ENCODE measurements at regions of chr4 and their contacts with region 1.

Region 1: GRCh38 chr4:87006676-87007527 is 72.1 kb downstream of the AFF1 start:
- DNase-seq: peak; percentile 93
- ATAC-seq: peak; percentile 83
- H3K4me3 Mint-ChIP-seq: peak overlapping the region; percentile 97
- H3K27ac Mint-ChIP-seq: peak overlapping the region; percentile 98
- H3K4me1 Mint-ChIP-seq: peaks cover 56% of the 10 kb centered on the region
- H3K27me3 Mint-ChIP-seq: no peaks in the 10 kb centered on the region
- CTCF ChIP-seq: no peak

Region 2: GRCh38 chr4:85701861-85702321 is 1305.0 kb before region 1 on chr4:
- CTCF ChIA-PET with region 1: no interaction called
- POLR2A ChIA-PET with region 1: no interaction called
- intact Hi-C with region 1: loop called (anchors 10 kb)
- DNase-seq: no peak
- ATAC-seq: peak; percentile 80
- H3K4me3 Mint-ChIP-seq: peak overlapping the region; percentile 70
- H3K27ac Mint-ChIP-seq: peak overlapping the region; percentile 93
- H3K4me1 Mint-ChIP-seq: peaks cover 73% of the 10 kb centered on the region
- H3K27me3 Mint-ChIP-seq: no peaks in the 10 kb centered on the region
- CTCF ChIP-seq: no peak

Region 3: DNA sequence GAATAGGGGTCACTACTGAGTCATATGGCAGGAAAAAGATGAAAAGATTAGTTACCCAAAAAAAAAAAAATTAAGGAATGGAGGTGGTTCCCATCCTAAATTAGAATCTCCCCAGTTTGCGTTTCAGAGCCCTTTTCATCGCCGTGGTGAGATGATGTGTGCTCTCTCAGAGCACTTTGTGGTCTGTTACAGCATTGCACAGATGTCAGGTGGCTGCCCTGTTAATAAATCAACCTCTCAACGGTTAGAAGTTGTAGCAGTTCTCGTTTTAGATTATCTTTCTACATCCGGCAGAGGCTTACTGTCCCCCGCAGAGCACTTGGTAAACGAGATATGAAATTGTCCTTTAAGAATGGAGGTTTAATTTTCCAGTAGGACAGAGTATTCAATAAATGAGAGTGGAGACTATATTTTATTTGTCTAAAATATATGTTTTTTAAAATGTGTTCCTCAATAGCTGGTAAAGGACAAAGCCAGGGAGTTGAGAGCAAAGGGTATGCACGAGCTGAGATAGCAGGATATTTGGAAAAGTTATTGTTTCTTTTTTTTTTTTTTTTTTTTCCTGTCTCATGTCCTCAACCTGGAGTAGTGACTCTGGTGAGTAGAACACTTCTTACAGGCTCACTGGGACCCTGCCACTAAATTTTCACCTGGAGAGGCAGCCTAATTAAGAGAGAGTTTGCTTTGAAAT is 45.2 kb before region 1 on chr4:
- CTCF ChIA-PET with region 1: no interaction called
- POLR2A ChIA-PET with region 1: interaction called, 4 read pairs
- intact Hi-C with region 1: loop called (anchors 1 kb)
- DNase-seq: no peak
- ATAC-seq: peak; percentile 89
- H3K4me3 Mint-ChIP-seq: peak overlapping the region; percentile 33
- H3K27ac Mint-ChIP-seq: peak overlapping the region; percentile 82
- H3K4me1 Mint-ChIP-seq: peaks cover 50% of the 10 kb centered on the region
- H3K27me3 Mint-ChIP-seq: no peaks in the 10 kb centered on the region
- CTCF ChIP-seq: no peak

Region 4: GRCh38 chr4:87026800-87027495 is 20.0 kb after region 1 on chr4:
- CTCF ChIA-PET with region 1: interaction called, 3 read pairs
- POLR2A ChIA-PET with region 1: interaction called, 21 read pairs
- intact Hi-C with region 1: loop called (anchors 1 kb)
- DNase-seq: no peak
- ATAC-seq: peak; percentile 94
- H3K4me3 Mint-ChIP-seq: peak overlapping the region; percentile 56
- H3K27ac Mint-ChIP-seq: peak overlapping the region; percentile 89
- H3K4me1 Mint-ChIP-seq: peaks cover 65% of the 10 kb centered on the region
- H3K27me3 Mint-ChIP-seq: no peaks in the 10 kb centered on the region
- CTCF ChIP-seq: no peak

Region 5: DNA sequence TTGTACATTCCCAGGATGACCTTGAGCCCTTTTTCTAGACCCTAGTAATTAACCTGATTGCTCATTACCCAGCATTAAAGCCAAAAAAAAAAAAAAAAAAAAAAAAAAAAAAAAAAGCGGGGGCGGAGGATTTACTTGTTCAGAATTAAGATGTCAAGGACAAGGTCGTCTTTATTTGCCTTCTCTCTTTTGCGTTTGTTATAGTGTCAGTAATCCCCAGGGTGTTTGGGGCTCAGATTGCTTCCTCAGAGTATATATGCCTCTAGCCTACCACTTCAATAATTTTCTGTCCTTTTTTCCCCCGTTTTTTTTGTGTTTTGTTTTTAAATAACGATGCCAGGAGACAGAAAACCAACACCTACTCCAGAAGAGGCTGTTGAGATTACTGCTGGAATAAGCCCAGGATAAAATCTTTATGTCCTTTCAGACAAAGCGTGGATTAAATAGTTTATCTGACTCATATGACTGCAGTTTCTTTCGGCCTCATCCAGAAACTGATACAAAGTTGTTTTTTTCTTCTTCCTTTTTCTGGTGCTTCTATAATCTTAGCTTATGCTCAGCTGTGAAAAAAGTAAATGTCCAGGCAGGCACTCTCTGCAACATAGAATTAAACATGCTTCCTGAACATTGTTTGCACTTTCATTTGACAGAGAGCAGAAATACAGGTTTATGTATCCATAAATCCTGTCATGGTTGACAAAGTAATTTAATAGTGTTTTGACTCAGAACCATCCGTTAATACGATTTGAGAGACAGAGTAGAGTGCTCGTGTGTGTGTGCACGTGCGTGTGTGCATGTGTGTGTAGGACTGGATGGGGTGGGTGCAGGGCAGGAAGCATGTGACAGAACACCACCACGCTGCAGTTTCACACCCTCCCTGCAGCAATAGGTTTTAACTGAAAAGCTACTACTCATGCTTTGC is 66.6 kb after region 1 on chr4:
- CTCF ChIA-PET with region 1: no interaction called
- POLR2A ChIA-PET with region 1: interaction called, 28 read pairs
- intact Hi-C with region 1: loop called (anchors 1 kb)
- DNase-seq: peak; percentile 35
- ATAC-seq: peak; percentile 84
- H3K4me3 Mint-ChIP-seq: peak overlapping the region; percentile 82
- H3K27ac Mint-ChIP-seq: peak overlapping the region; percentile 93
- H3K4me1 Mint-ChIP-seq: peaks cover 40% of the 10 kb centered on the region
- H3K27me3 Mint-ChIP-seq: no peaks in the 10 kb centered on the region
- CTCF ChIP-seq: no peak

Region 6: GRCh38 chr4:87093443-87094123 is 86.7 kb after region 1 on chr4:
- CTCF ChIA-PET with region 1: interaction called, 10 read pairs
- POLR2A ChIA-PET with region 1: interaction called, 25 read pairs
- intact Hi-C with region 1: loop called (anchors 1 kb)
- DNase-seq: no peak
- ATAC-seq: peak; percentile 89
- H3K4me3 Mint-ChIP-seq: no peak overlapping the region
- H3K27ac Mint-ChIP-seq: peak overlapping the region; percentile 62
- H3K4me1 Mint-ChIP-seq: peaks cover 20% of the 10 kb centered on the region
- H3K27me3 Mint-ChIP-seq: no peaks in the 10 kb centered on the region
- CTCF ChIP-seq: peak; percentile 15

Region 7: DNA sequence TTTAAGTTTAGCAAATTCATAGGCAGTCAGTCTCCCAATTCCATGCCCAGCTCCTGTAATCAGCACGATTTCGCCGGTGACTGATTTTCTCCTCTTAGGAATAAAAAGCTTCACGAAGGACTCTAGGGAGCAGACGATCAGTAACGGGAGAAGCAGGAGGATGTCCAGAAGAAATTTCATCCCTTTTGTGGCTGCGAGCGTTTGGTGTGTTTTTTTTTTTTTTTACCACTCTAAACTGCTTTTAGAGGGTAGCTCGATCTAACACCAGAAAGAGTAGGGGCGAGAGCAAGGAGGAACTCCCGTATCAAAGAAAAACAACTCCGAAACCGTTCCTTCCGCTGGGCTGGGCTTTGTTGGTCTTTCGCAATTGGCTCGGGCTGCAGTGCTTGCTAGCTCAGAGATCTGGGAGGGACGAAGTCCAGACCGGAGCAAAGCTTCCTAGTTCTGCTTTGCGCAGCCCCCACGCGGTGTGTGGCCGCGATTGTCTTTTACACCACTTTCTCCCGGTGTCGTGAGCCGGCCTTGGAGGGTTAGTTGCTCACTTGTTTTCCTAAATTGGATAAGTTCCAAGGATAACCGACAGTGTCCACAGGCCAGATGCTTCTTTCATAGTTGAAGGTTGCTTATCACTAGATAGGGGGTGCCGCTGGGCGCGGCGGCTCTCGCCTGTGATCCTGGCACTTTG is 384.1 kb after region 1 on chr4 and contains the start of gene HSD17B11:
- CTCF ChIA-PET with region 1: no interaction called
- POLR2A ChIA-PET with region 1: no interaction called
- intact Hi-C with region 1: loop called (anchors 5 kb)
- DNase-seq: peak; percentile 70
- ATAC-seq: peak; percentile 99
- H3K4me3 Mint-ChIP-seq: peak within 1 kb of the TSS; percentile 97
- H3K27ac Mint-ChIP-seq: peak within 1 kb of the TSS; percentile 96
- H3K4me1 Mint-ChIP-seq: peaks cover 48% of the 10 kb centered on the region
- H3K27me3 Mint-ChIP-seq: no peaks in the 10 kb centered on the region
- CTCF ChIP-seq: no peak
- total RNA-seq, gene HSD17B11: 26.2 and 28.4 TPM in 2 replicates

Measured in activated B cell treated with CpG ODN at 0.5 μM for 24 hours (primary cell).